ENCODE measurements at regions of chr14 and their contacts with region 1.

Region 1: DNA sequence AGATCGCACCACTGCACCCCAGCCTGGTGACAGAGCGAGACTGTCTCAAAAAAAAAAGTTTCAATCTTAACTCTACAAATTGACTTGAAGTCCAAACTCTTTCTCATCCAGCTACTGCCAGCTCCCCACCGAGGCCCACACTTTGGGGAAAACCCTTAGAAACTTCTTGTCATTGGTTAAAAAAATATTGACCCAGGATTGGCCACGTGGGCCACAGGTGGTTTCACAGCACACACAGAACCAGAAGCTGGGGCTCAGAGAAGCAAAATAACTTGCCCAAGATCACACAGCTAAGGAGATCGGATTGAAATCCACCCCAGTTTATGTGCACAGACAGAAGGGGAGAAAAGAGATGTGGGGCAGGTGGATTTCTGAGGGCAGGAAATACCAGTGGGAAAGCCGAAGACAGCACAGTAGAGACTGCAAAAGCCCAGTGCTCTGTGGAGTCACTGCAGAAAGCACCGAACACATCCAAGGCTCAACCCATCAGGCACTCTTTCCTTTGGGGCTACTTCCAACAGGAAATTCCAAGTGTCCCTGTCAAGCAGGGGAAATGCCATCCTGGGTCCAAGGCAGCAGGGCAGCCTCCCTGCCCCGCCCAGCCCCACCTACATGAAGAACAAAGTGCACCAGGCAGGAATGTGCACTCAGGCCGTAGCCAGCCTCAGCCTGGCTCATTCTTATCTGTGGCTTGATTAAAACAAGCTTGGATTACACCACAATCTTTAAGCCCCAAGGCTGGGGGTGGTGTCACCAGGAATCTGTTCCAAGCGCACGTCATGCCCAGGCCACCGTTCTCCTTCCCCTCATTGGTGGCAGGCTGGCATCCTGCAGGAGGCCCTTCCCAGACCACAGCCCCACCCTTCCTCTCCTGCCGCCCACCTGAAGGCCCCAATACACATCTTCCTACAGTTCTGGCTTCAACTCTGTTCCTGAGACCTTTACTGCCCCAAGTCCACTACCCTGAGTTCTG is 72.5 kb downstream of the ITPK1 start:
- DNase-seq: peak; percentile 72 to 74
- ATAC-seq: peak; percentile 52 to 82 (median 76)
- H3K4me3 ChIP-seq: no peak overlapping the region
- H3K27ac ChIP-seq: peak overlapping the region; percentile 46 to 92 (median 86)
- H3K4me1 ChIP-seq: peaks cover 18 to 95% (median 83%) of the 10 kb centered on the region in 9 donors
- H3K27me3 ChIP-seq: no peaks in the 10 kb centered on the region
- CTCF ChIP-seq: no peak

Region 2: DNA sequence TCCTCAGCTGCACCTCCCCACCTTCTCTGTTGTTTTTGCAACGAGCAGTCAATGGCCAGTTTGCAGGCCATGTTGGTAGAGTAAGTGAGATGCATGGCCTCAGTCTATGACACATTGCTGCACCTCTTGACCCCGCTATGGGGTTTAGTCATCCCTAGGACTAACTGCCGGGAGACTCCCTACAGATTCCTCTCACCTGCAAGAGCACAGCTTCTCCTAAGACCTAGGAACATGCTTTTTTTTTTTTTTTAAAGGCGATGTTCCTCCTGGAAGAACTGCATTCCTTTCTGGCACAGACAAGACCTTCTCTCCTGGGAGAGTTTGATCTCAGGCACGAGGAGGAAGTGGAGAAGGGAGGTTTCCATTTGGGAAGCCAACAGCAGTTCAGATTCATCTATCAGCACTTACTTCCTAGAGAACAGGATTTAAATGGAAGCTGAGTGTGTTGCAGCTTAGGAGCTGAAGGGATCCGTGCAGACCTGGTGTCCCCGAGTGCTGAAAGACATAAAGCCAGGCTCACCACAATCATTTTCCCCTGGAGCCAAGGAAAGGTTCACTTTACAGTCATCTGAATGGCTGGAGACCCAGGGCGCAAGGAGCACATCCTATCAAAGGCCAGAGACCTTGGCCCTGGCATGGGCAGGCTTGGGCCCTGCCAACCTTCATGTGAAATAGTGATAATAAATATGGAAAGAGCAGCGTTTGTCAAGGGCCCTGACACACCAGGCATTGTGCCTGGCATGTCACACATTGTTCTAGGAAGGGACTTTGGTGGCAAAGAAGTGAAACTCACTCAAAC is 398.9 kb before region 1 on chr14:
- intact Hi-C with region 1: no loop called
- DNase-seq: no peak
- ATAC-seq: peak in 6 of 8 donors; percentile 26 to 76 (median 52)
- H3K4me3 ChIP-seq: no peak overlapping the region
- H3K27ac ChIP-seq: no peak overlapping the region
- H3K4me1 ChIP-seq: peaks cover 0 to 55% (median 6%) of the 10 kb centered on the region in 9 donors
- H3K27me3 ChIP-seq: no peaks in the 10 kb centered on the region
- CTCF ChIP-seq: no peak

Region 3: DNA sequence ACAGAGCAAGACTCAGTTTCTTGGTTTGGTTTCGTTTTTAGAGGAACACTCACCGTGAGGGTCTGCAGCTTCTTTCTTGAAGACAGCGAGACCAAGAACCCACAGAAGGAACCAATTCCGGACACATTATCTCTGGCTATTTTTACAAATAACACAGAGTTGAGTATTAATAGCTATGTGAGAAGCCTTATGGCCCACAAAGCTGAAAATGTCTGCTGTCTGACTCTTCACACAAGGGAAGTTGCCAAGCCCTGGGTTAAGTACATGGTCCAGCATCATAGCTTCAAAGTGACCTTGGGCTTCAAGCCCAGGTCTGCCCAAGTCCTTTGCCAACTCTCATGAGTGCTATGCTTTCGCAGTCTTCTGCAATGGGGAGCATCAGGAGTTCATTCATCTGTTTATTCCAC is 292.3 kb before region 1 on chr14:
- intact Hi-C with region 1: no loop called
- DNase-seq: peak; percentile 24 to 56
- ATAC-seq: peak in 7 of 8 donors; percentile 29 to 75 (median 57)
- H3K4me3 ChIP-seq: peak overlapping the region in 2 of 10 donors; percentile 15 to 42
- H3K27ac ChIP-seq: peak overlapping the region in 9 of 10 donors; percentile 50 to 85 (median 76)
- H3K4me1 ChIP-seq: peaks cover 10 to 84% (median 17%) of the 10 kb centered on the region in 9 donors
- H3K27me3 ChIP-seq: peaks cover 0 to 26% (median 0%) of the 10 kb centered on the region in 7 donors
- CTCF ChIP-seq: no peak

Region 4: GRCh38 chr14:92973261-92973797 is 69.9 kb before region 1 on chr14:
- intact Hi-C with region 1: loop called in 2 of 10 experiments (anchors 1 to 5 kb)
- DNase-seq: peak; percentile 79 to 82
- ATAC-seq: peak; percentile 82 to 94 (median 92)
- H3K4me3 ChIP-seq: no peak overlapping the region
- H3K27ac ChIP-seq: peak overlapping the region; percentile 45 to 88 (median 74)
- H3K4me1 ChIP-seq: peaks cover 3 to 51% (median 26%) of the 10 kb centered on the region in 9 donors
- H3K27me3 ChIP-seq: no peaks in the 10 kb centered on the region
- CTCF ChIP-seq: peak; percentile 66 to 83 (median 75)

Region 5: DNA sequence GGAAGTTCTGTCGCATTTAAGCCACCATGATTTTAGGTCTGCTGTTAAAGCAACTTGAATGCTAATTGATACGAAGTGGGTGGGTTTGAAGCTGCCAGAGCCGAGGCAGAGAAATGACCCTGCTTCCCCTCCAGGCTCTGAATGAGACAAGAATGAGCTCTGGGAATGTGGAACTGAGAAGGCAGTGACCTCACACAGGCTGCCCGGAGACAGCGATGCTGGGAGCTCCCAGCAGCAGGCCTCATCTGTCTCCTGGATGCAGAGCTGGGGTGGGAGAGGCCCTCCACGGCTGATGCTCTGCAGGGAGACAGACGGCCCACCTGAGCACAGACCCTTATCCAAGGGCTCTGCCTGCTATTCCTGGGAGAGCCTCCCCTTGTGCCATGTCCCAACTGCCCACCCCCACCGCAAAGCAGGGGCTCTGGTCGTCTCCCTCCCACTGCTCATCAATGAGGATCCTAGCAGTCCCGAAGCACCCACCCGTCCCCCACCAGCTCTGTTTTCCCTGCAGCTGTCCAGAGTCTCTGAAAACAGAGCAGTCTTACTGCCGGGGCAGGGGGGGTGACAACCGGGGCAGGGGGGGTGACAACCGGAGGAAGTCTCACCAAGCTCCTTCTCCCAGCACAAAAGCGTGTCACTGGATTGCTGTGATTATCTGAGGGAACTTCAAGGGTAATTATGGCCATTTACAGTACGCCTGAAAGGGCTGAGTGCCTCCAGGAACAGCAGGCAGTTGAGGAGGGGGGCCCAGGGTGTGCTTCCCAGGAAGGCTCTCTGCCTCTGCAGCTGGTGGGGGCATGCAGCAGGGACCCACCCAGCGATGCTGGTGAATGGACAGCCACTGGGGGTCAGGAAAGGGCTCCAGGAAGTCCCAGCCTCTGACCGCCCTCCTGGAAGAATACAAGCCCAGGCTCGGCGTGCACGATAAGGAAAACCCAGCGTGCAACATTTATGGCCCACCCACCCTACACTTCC is 52.5 kb before region 1 on chr14:
- intact Hi-C with region 1: loop called in 1 of 10 experiments (anchors 5 kb)
- DNase-seq: peak in 1 of 2 donors; percentile 23
- ATAC-seq: peak in 3 of 8 donors; percentile 7 to 31 (median 27)
- H3K4me3 ChIP-seq: no peak overlapping the region
- H3K27ac ChIP-seq: peak overlapping the region in 6 of 10 donors; percentile 9 to 88 (median 48)
- H3K4me1 ChIP-seq: peaks cover 15 to 66% (median 55%) of the 10 kb centered on the region in 9 donors
- H3K27me3 ChIP-seq: no peaks in the 10 kb centered on the region
- CTCF ChIP-seq: peak in 3 of 9 donors; percentile 12 to 34 (median 15)

Region 6: GRCh38 chr14:93090826-93091555 is 47.7 kb after region 1 on chr14:
- intact Hi-C with region 1: loop called in 1 of 10 experiments (anchors 5 kb)
- DNase-seq: peak in 1 of 2 donors; percentile 48
- ATAC-seq: peak; percentile 47 to 69 (median 56)
- H3K4me3 ChIP-seq: no peak overlapping the region
- H3K27ac ChIP-seq: peak overlapping the region; percentile 12 to 82 (median 66)
- H3K4me1 ChIP-seq: peaks cover 40 to 95% (median 77%) of the 10 kb centered on the region in 9 donors
- H3K27me3 ChIP-seq: no peaks in the 10 kb centered on the region
- CTCF ChIP-seq: no peak

Measured in heart right ventricle (tissue), 16 donors.